ENCODE measurements at regions of chr7 and their contacts with region 1.

Region 1: GRCh38 chr7:50142425-50143017 is 49.5 kb upstream of the ZPBP start:
- DNase-seq: no peak
- H3K4me3 ChIP-seq: no peak overlapping the region; a peak in 1 of 4 replicates
- H3K27ac ChIP-seq: no peak overlapping the region
- H3K4me1 ChIP-seq: no peaks in the 10 kb centered on the region
- H3K27me3 ChIP-seq: no peaks in the 10 kb centered on the region
- CTCF ChIP-seq: peak; percentile 93
- EP300 ChIP-seq: no peak
- RAD21 ChIP-seq: peak; percentile 82

Region 2: DNA sequence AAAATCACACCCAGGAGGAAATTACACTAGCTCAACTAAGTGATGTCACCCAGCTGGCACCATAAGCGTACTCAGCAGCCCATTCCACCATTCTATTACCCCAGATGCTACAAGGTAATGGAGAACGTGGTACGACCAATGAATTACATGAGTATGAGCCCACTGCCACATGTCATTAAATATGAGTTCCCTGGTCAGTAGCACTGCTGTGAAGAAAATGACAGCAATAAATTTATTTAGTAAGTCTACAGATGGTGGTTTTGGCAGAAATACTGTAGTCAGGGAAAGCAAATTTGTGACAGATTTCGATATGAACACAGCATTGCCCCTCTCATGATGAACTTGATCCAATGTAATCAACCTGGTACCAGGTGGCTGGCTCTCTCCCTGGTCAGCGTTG is 214.9 kb before region 1 on chr7:
- CTCF ChIA-PET with region 1: no interaction called
- POLR2A ChIA-PET with region 1: no interaction called
- DNase-seq: no peak
- H3K4me3 ChIP-seq: no peak overlapping the region
- H3K27ac ChIP-seq: no peak overlapping the region
- H3K4me1 ChIP-seq: no peaks in the 10 kb centered on the region
- H3K27me3 ChIP-seq: no peaks in the 10 kb centered on the region
- CTCF ChIP-seq: no peak
- EP300 ChIP-seq: no peak
- RAD21 ChIP-seq: no peak

Region 3: DNA sequence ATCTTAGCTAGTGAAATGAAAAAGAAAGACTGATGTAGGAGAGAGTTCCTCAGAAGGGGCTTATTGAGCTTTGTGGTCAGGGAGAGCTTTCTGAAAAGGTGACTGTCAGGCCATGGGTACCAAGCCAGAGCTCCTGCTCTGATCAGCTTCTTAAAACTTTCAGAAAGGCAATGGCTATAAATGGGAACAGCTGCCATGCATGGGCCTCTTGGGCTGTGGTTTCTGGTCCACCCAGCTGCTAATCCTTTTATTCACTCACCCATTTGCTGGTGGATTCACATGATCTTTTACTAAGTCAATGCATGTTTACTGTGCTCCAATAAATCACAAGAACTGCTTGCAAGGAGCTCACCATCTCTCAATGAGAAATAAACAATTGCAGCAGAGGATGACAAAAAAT is 10.6 kb after region 1 on chr7:
- CTCF ChIA-PET with region 1: interaction called, 13 read pairs
- POLR2A ChIA-PET with region 1: no interaction called
- DNase-seq: no peak
- H3K4me3 ChIP-seq: no peak overlapping the region
- H3K27ac ChIP-seq: no peak overlapping the region
- H3K4me1 ChIP-seq: no peaks in the 10 kb centered on the region
- H3K27me3 ChIP-seq: no peaks in the 10 kb centered on the region
- CTCF ChIP-seq: no peak
- EP300 ChIP-seq: no peak
- RAD21 ChIP-seq: no peak